Activated T-helper 1 cell treated with anti-CD3 and anti-CD28 coated beads, Interleukin-12 subunit alpha, Interleukin-12 subunit beta, Interleukin-2, Interleukin-4 antibody, amounts not matched to agents 30 ng/mL and 10 ng/mL and 1 ng/mL, durations not matched to agents 14 hours and 24 hours and 36 hours (primary cell): ENCODE measurements at regions of chr7 and their contacts with region 1.

Region 1: GRCh38 chr7:139133335-139134139 is 24.0 kb upstream of the ZC3HAV1 start:
- DNase-seq: peak; percentile 81
- H3K4me3 Mint-ChIP-seq: peak overlapping the region; percentile 89
- H3K27ac Mint-ChIP-seq: peak overlapping the region; percentile 71
- H3K4me1 Mint-ChIP-seq: peaks cover 31% of the 10 kb centered on the region
- H3K27me3 Mint-ChIP-seq: peaks cover 2% of the 10 kb centered on the region

Region 2: DNA sequence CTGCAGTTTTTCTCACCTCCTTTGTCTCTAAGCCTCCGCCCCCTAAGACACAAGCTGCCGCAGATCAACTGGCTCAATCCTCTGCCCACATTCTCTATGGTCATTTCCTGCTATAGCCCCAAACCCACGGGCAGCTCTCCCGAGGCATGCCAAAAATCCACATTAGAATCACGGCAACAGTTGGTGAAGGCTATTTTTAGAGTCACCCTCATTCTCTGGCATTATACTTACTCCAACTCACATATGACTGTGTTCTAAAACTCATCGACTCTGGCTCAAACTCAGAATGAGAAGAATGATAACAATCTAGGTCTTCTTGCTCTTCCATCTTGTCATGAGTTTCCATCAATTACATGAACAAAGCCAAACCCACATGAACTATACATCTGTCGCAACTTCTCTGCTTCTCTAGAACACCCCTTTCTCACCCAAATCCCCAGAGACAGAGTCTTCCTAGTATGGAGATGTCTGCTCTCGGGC is 141.4 kb before region 1 on chr7:
- intact Hi-C with region 1: no loop called
- DNase-seq: no peak
- H3K4me3 Mint-ChIP-seq: no peak overlapping the region
- H3K27ac Mint-ChIP-seq: no peak overlapping the region
- H3K4me1 Mint-ChIP-seq: no peaks in the 10 kb centered on the region
- H3K27me3 Mint-ChIP-seq: peaks cover 35% of the 10 kb centered on the region

Region 3: GRCh38 chr7:139104091-139104450 is 29.5 kb before region 1 on chr7:
- intact Hi-C with region 1: loop called (anchors 1 kb)
- DNase-seq: no peak
- H3K4me3 Mint-ChIP-seq: peak overlapping the region; percentile 87
- H3K27ac Mint-ChIP-seq: peak overlapping the region; percentile 92
- H3K4me1 Mint-ChIP-seq: peaks cover 52% of the 10 kb centered on the region
- H3K27me3 Mint-ChIP-seq: no peaks in the 10 kb centered on the region

Region 4: DNA sequence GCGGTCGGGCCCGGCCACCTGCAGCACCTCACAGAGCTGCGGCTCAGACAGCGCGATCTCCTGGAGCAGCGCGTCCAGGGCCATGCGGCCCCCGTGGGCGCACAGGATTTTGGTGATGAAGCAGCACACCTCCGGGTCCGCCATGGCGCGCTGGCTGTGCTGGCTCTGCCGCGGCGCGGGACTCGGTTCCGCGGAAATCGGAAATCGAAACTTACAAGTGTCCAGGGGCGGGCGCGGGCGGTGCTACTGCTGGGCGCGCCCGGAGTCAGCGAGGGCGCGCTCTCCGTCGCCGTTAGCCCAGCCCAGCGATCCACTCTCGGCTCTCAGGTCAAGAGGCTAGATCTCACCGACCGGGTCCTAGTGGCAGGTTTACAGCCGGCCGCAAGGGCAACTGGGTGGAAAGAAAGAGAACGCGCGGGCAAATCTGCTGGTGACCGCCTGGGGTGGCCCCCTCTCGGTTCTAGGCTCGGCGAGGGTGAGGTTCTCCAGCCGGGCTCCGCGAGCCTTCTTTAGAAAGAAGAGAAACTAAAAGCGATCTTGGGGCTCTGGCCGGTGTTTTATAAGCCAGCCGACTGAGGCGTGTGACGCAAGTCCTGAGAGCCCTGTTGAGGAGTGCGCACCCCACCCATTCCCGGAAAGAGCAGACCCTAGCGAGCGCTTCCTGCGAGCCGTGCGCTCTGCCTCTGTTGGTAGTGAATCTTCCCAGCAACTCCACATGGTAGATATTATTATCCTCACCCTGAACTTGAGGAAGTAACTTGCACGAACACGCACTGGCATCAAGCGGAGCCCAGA is 24.2 kb before region 1 on chr7 and contains the start of gene ZC3HAV1:
- intact Hi-C with region 1: loop called (anchors 1 kb)
- DNase-seq: peak; percentile 87
- H3K4me3 Mint-ChIP-seq: peak within 1 kb of the TSS; percentile 97
- H3K27ac Mint-ChIP-seq: peak within 1 kb of the TSS; percentile 98
- H3K4me1 Mint-ChIP-seq: peaks cover 38% of the 10 kb centered on the region
- H3K27me3 Mint-ChIP-seq: no peaks in the 10 kb centered on the region
- total RNA-seq, gene ZC3HAV1: 89.7 and 90.0 TPM in 2 replicates

Region 5: GRCh38 chr7:139118234-139118804 is 15.2 kb before region 1 on chr7:
- intact Hi-C with region 1: loop called (anchors 1 kb)
- DNase-seq: no peak
- H3K4me3 Mint-ChIP-seq: peak overlapping the region; percentile 45
- H3K27ac Mint-ChIP-seq: peak overlapping the region; percentile 45
- H3K4me1 Mint-ChIP-seq: peaks cover 32% of the 10 kb centered on the region
- H3K27me3 Mint-ChIP-seq: no peaks in the 10 kb centered on the region

Region 6: GRCh38 chr7:139230774-139231512 is 97.4 kb after region 1 on chr7 and contains the start of gene UBN2:
- intact Hi-C with region 1: loop called (anchors 1 kb)
- DNase-seq: peak; percentile 89
- H3K4me3 Mint-ChIP-seq: peak within 1 kb of the TSS; percentile 100
- H3K27ac Mint-ChIP-seq: peak within 1 kb of the TSS; percentile 97
- H3K4me1 Mint-ChIP-seq: peaks cover 32% of the 10 kb centered on the region
- H3K27me3 Mint-ChIP-seq: peaks cover 27% of the 10 kb centered on the region
- total RNA-seq, gene UBN2: 14.7 and 15.6 TPM in 2 replicates

Region 7: DNA sequence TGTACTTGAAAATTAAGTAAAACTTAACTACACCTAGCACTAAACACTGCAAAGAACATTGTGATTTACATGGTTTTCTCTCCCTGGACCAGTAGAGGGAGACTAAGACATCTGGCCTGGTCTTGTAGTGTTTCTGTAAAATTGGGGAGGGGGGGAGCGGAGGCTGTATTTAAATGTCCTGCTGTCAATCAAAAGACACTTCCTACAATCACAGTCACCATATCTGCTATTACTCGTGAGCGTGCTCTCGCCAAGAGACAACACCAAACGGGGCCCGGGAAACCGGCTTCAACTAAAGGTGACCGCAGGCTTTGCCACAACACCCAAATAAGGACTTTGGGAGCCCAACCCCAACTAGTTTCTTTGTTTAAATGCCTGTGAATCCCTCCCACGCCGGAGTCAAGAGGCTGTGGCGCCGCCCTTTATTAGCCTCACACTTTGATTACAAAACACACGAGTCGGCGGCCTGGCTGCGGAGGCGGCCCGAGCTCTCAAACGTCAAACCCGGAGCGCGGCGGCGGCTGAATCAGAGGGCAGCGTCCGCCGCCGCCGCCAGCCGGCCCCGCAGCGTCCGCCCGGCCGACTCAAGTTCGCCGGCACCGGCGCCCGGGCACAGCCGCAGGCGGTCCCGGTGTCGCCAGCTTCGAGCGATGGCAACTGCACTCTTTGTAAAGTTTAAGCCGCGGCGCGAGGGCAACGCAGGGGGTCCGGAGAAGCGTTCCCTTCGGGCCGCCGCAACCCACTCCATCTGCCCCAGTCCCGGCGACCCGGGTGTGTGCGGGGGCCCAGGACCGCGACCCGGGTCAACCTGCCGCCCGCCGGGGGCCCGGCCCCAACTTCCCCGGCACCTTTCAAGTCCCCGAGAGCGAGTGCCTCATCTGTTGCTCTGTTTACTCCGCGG is 1041.9 kb after region 1 on chr7:
- intact Hi-C with region 1: no loop called
- DNase-seq: peak; percentile 88
- H3K4me3 Mint-ChIP-seq: peak overlapping the region; percentile 83
- H3K27ac Mint-ChIP-seq: peak overlapping the region; percentile 69
- H3K4me1 Mint-ChIP-seq: peaks cover 56% of the 10 kb centered on the region
- H3K27me3 Mint-ChIP-seq: peaks cover 6% of the 10 kb centered on the region

Region 8: GRCh38 chr7:140242057-140243031 is 1108.8 kb after region 1 on chr7:
- intact Hi-C with region 1: no loop called
- DNase-seq: no peak
- H3K4me3 Mint-ChIP-seq: no peak overlapping the region
- H3K27ac Mint-ChIP-seq: no peak overlapping the region
- H3K4me1 Mint-ChIP-seq: peaks cover 15% of the 10 kb centered on the region
- H3K27me3 Mint-ChIP-seq: no peaks in the 10 kb centered on the region